ENCODE measurements at regions of chr1 and their contacts with region 1.

Region 1: GRCh38 chr1:67840449-67840848 is 7.2 kb upstream of the GNG12 start:
- DNase-seq: no peak
- H3K4me3 ChIP-seq: no peak overlapping the region
- CTCF ChIP-seq: no peak
- POLR2A ChIP-seq: no peak

Region 2: GRCh38 chr1:67524143-67525052 is 316.1 kb before region 1 on chr1:
- intact Hi-C with region 1: loop called (anchors 10 kb)
- DNase-seq: peak in 1 of 2 donors; percentile 35
- H3K4me3 ChIP-seq: no peak overlapping the region
- CTCF ChIP-seq: no peak
- POLR2A ChIP-seq: no peak